ENCODE measurements at regions of chr1 and their contacts with region 1.

Region 1: GRCh38 chr1:59699227-59699847 is 115.4 kb upstream of the HOOK1 start:
- DNase-seq: peak in 4 of 9 experiments; percentile 20 to 70 (median 44)
- ATAC-seq: peak; percentile 55
- H3K4me3 ChIP-seq: no peak overlapping the region
- H3K4me3 Mint-ChIP-seq: no peak overlapping the region
- H3K27ac ChIP-seq: no peak overlapping the region
- H3K27ac Mint-ChIP-seq: no peak overlapping the region
- H3K4me1 ChIP-seq: peaks cover 13% of the 10 kb centered on the region
- H3K4me1 Mint-ChIP-seq: peaks cover 19% of the 10 kb centered on the region
- H3K27me3 ChIP-seq: no peaks in the 10 kb centered on the region
- H3K27me3 Mint-ChIP-seq: no peaks in the 10 kb centered on the region
- CTCF ChIP-seq: peak; percentile 99

Region 2: GRCh38 chr1:58652651-58653184 is 1046.6 kb before region 1 on chr1:
- CTCF ChIA-PET with region 1: interaction called, 9 read pairs
- POLR2A ChIA-PET with region 1: no interaction called
- intact Hi-C with region 1: loop called in 1 of 2 experiments (anchors 10 kb)
- DNase-seq: peak; percentile 11 to 83 (median 53)
- ATAC-seq: peak; percentile 90
- H3K4me3 ChIP-seq: no peak overlapping the region
- H3K4me3 Mint-ChIP-seq: no peak overlapping the region
- H3K27ac ChIP-seq: no peak overlapping the region
- H3K27ac Mint-ChIP-seq: no peak overlapping the region
- H3K4me1 ChIP-seq: peaks cover 14% of the 10 kb centered on the region
- H3K4me1 Mint-ChIP-seq: peaks cover 23% of the 10 kb centered on the region
- H3K27me3 ChIP-seq: no peaks in the 10 kb centered on the region
- H3K27me3 Mint-ChIP-seq: no peaks in the 10 kb centered on the region
- CTCF ChIP-seq: peak; percentile 84

Region 3: DNA sequence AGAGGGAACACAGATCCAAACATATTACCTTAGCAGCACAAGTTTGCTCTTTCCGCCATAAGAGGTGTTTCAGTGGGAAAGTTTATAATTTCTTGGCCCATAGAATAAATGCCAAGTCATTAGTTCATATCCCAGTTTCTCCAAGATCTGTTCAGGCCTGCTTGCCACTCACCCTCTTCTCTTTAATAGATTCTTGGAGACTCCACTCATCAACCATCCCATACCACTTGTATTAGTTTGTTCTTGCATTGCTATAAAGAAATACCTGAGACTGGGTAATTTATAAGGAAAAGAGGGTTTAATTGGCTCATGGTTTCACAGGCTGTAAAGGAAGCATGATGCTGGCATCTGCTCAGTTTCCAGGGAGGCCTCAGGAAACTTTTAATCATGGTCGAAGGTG is 964.7 kb before region 1 on chr1:
- CTCF ChIA-PET with region 1: interaction called, 151 read pairs
- POLR2A ChIA-PET with region 1: no interaction called
- intact Hi-C with region 1: no loop called
- DNase-seq: no peak
- ATAC-seq: no peak
- H3K4me3 ChIP-seq: no peak overlapping the region
- H3K4me3 Mint-ChIP-seq: no peak overlapping the region
- H3K27ac ChIP-seq: no peak overlapping the region
- H3K27ac Mint-ChIP-seq: no peak overlapping the region
- H3K4me1 ChIP-seq: no peaks in the 10 kb centered on the region
- H3K4me1 Mint-ChIP-seq: peaks cover 5% of the 10 kb centered on the region
- H3K27me3 ChIP-seq: no peaks in the 10 kb centered on the region
- H3K27me3 Mint-ChIP-seq: no peaks in the 10 kb centered on the region
- CTCF ChIP-seq: no peak

Region 4: DNA sequence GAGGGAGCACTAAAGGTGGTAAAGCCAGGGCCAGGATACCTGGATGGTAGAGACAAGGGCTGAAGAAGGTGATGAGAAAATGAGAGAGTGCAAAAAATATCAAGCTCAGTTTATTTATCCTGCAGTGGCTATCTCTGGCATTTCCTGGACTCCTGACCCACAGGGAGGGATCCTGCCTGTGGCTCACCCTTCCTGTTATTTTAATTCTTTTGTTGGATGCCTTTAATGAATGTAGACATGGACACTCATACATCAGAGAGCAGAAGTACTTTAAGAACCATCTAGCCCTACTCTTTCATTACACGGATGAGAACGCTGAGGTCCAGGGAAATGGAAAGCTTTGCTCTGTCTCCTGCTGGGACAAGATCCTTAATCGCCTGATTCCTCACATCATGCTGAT is 936.1 kb before region 1 on chr1:
- CTCF ChIA-PET with region 1: interaction called, 12 read pairs
- POLR2A ChIA-PET with region 1: interaction called, 3 read pairs
- intact Hi-C with region 1: no loop called
- DNase-seq: no peak
- ATAC-seq: no peak
- H3K4me3 ChIP-seq: no peak overlapping the region
- H3K4me3 Mint-ChIP-seq: no peak overlapping the region
- H3K27ac ChIP-seq: no peak overlapping the region
- H3K27ac Mint-ChIP-seq: no peak overlapping the region
- H3K4me1 ChIP-seq: no peaks in the 10 kb centered on the region
- H3K4me1 Mint-ChIP-seq: no peaks in the 10 kb centered on the region
- H3K27me3 ChIP-seq: no peaks in the 10 kb centered on the region
- H3K27me3 Mint-ChIP-seq: peaks cover 5% of the 10 kb centered on the region
- CTCF ChIP-seq: no peak

Region 5: DNA sequence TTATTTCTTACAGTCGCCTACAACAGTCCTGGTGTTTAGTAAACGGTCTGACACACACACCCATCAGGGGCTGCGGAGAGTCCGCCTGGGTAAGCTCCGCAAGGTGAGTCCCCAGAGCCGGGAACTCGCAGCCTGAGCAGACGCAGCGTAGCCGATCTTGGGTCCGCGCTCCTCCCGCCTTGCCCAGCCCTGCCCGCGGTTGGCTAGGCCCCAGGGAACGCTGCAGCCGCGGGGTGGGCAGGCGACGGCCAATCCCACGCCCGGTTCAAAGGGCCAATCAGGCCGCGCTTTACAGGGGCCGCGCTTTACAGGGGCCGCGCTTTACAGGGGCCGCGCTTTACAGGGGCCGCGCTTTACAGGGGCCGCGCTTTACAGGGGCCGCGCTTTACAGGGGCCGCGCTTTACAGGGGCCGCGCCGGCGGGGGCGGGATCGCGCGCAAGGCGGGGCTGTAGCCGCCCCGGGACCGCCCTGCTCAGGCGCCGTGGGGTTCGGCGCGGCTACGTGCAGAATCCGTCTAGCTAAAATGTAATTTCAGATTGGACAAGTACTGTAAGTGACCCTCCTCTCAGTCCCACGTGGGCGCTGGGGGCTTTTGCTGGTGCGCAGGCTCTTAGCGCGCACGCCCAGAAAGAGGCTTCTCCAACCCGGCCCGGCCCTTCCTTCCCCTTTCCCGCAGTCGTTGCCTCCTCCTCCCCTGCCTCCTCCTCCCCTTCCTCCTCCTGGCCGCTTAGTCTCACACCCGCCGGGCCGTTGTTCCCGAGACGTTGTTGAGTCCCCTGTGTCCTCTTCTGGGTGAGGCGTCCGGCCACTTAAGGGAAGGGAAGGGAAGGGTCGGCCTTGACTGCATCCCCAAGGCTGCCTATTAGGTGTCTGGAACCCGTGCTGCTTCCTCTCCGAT is 402.7 kb before region 1 on chr1 and contains the start of gene FGGY:
- CTCF ChIA-PET with region 1: interaction called, 3 read pairs
- POLR2A ChIA-PET with region 1: no interaction called
- intact Hi-C with region 1: loop called in 1 of 2 experiments (anchors 10 kb)
- DNase-seq: peak; percentile 69 to 96 (median 84)
- ATAC-seq: peak; percentile 92
- H3K4me3 ChIP-seq: peak within 1 kb of the TSS; percentile 75 to 77
- H3K4me3 Mint-ChIP-seq: peak within 1 kb of the TSS; percentile 90
- H3K27ac ChIP-seq: peak within 1 kb of the TSS; percentile 81 to 92
- H3K27ac Mint-ChIP-seq: peak within 1 kb of the TSS; percentile 96
- H3K4me1 ChIP-seq: no peaks in the 10 kb centered on the region
- H3K4me1 Mint-ChIP-seq: peaks cover 25% of the 10 kb centered on the region
- H3K27me3 ChIP-seq: no peaks in the 10 kb centered on the region
- H3K27me3 Mint-ChIP-seq: no peaks in the 10 kb centered on the region
- CTCF ChIP-seq: no peak
- total RNA-seq, gene FGGY: 12.8 to 14.3 TPM

Region 6: DNA sequence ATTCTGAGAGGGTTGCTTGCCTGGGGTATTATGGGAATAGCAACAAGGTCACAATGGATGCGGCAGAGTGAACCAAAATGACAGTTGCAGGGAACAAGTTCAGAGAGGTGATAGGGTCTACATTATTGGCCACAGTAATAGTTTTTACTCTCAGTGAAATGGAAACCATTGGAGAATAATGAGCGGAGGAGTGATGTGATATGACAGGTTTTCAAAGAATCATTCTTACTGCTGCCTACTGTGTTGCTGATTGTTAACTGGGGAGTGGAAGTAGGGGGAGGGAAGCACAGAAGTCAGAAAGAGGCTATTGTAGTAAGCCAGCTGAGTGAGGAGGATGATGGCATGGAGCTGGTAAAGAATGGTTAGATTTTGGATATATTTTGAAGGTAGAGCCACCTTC is 79.8 kb before region 1 on chr1:
- CTCF ChIA-PET with region 1: no interaction called
- POLR2A ChIA-PET with region 1: no interaction called
- intact Hi-C with region 1: no loop called
- DNase-seq: no peak
- ATAC-seq: no peak
- H3K4me3 ChIP-seq: no peak overlapping the region
- H3K4me3 Mint-ChIP-seq: no peak overlapping the region
- H3K27ac ChIP-seq: no peak overlapping the region
- H3K27ac Mint-ChIP-seq: no peak overlapping the region
- H3K4me1 ChIP-seq: no peaks in the 10 kb centered on the region
- H3K4me1 Mint-ChIP-seq: no peaks in the 10 kb centered on the region
- H3K27me3 ChIP-seq: no peaks in the 10 kb centered on the region
- H3K27me3 Mint-ChIP-seq: no peaks in the 10 kb centered on the region
- CTCF ChIP-seq: no peak

Region 7: DNA sequence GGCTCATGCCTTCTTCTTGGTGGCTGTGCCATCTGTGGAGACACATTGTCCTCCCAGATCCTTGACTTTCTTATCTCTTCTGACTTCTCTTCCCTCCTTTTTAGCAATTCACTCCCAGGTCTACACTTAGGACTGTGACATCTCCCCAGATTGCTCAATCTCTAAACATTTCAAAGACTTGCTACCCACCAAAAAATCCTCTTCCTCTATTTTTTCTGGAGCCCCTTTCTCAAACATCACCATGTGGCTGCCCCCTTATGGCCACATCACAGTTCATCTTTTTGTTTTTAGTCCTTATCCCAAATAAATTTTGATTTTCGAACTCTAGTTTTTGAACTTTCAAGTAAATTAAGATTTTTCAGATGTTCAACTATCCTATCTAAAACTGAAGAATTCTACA is 33.2 kb before region 1 on chr1:
- CTCF ChIA-PET with region 1: no interaction called
- POLR2A ChIA-PET with region 1: no interaction called
- intact Hi-C with region 1: no loop called
- DNase-seq: no peak
- ATAC-seq: no peak
- H3K4me3 ChIP-seq: no peak overlapping the region
- H3K4me3 Mint-ChIP-seq: no peak overlapping the region
- H3K27ac ChIP-seq: no peak overlapping the region
- H3K27ac Mint-ChIP-seq: no peak overlapping the region
- H3K4me1 ChIP-seq: no peaks in the 10 kb centered on the region
- H3K4me1 Mint-ChIP-seq: no peaks in the 10 kb centered on the region
- H3K27me3 ChIP-seq: no peaks in the 10 kb centered on the region
- H3K27me3 Mint-ChIP-seq: no peaks in the 10 kb centered on the region
- CTCF ChIP-seq: no peak

Region 8: DNA sequence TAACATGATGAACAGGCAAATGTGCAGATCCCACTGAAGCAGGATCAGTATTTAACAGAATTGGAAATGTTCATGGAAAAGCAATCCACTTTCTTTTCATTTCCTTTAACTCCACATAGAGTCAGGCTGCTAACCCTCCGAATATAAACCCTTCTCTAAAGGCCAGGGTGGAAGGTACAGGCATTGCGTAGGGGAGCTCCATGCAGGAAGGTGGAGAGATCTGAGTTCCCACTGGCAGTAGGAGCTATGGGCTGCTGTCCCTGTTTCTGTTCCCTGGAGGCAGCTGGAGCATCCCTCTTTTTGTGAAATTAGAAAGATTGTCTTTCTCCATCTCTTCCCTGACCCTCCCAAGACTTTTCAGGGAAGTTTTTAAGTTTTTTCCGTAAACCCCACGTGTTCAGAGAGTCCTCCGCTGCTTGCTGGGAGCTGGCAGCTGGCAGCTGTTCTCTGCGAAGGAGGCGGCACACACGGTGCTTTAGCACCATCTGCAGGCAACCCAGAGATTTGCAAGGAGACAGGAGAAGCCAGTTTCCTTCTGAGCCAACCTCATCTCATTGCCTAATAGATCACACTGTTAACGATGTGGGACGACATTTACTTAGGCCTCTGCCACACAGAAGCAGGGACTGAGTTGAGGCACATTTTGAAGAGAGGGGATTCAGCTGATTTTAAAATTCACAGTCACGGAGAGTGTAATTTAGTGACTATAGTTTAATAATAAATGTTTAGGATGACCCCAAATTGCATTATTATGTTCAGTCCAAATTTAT is 60.0 kb after region 1 on chr1:
- CTCF ChIA-PET with region 1: interaction called, 44 read pairs
- POLR2A ChIA-PET with region 1: no interaction called
- intact Hi-C with region 1: loop called (anchors 1 to 2 kb)
- DNase-seq: peak; percentile 48 to 83 (median 65)
- ATAC-seq: peak; percentile 96
- H3K4me3 ChIP-seq: no peak overlapping the region
- H3K4me3 Mint-ChIP-seq: no peak overlapping the region
- H3K27ac ChIP-seq: no peak overlapping the region
- H3K27ac Mint-ChIP-seq: no peak overlapping the region
- H3K4me1 ChIP-seq: no peaks in the 10 kb centered on the region
- H3K4me1 Mint-ChIP-seq: peaks cover 6% of the 10 kb centered on the region
- H3K27me3 ChIP-seq: no peaks in the 10 kb centered on the region
- H3K27me3 Mint-ChIP-seq: no peaks in the 10 kb centered on the region
- CTCF ChIP-seq: peak; percentile 95

Measured in CD8-positive, alpha-beta T cell (primary cell).